Sigmoid colon (tissue), 7 donors: ENCODE measurements at regions of chr17 and their contacts with region 1.

Region 1: GRCh38 chr17:65055348-65056261 is 935 bp downstream of the GNA13 start:
- DNase-seq: peak; percentile 88
- H3K4me3 ChIP-seq: peak overlapping the region; percentile 91 to 97 (median 96)
- H3K27ac ChIP-seq: peak overlapping the region; percentile 98 to 99 (median 99)
- H3K4me1 ChIP-seq: peaks cover 0 to 43% (median 33%) of the 10 kb centered on the region in 4 donors
- H3K27me3 ChIP-seq: no peaks in the 10 kb centered on the region
- CTCF ChIP-seq: no peak
- EP300 ChIP-seq: peak in 1 of 4 donors; percentile 39
- POLR2A ChIP-seq: peak in 1 of 2 donors; percentile 33

Region 2: GRCh38 chr17:64950871-64951270 is 104.7 kb before region 1 on chr17:
- intact Hi-C with region 1: no loop called
- DNase-seq: no peak
- H3K4me3 ChIP-seq: no peak overlapping the region
- H3K27ac ChIP-seq: no peak overlapping the region
- H3K4me1 ChIP-seq: no peaks in the 10 kb centered on the region
- H3K27me3 ChIP-seq: no peaks in the 10 kb centered on the region
- CTCF ChIP-seq: no peak
- EP300 ChIP-seq: no peak
- POLR2A ChIP-seq: no peak

Region 3: GRCh38 chr17:64975329-64976087 is 80.1 kb before region 1 on chr17:
- intact Hi-C with region 1: loop called (anchors 2 kb)
- DNase-seq: peak; percentile 98
- H3K4me3 ChIP-seq: peak overlapping the region; percentile 66 to 89 (median 82)
- H3K27ac ChIP-seq: peak overlapping the region; percentile 95 to 99 (median 99)
- H3K4me1 ChIP-seq: peaks cover 0 to 25% (median 14%) of the 10 kb centered on the region in 4 donors
- H3K27me3 ChIP-seq: no peaks in the 10 kb centered on the region
- CTCF ChIP-seq: no peak
- EP300 ChIP-seq: peak in 2 of 4 donors; percentile 42 to 53
- POLR2A ChIP-seq: peak; percentile 82 to 84

Region 4: DNA sequence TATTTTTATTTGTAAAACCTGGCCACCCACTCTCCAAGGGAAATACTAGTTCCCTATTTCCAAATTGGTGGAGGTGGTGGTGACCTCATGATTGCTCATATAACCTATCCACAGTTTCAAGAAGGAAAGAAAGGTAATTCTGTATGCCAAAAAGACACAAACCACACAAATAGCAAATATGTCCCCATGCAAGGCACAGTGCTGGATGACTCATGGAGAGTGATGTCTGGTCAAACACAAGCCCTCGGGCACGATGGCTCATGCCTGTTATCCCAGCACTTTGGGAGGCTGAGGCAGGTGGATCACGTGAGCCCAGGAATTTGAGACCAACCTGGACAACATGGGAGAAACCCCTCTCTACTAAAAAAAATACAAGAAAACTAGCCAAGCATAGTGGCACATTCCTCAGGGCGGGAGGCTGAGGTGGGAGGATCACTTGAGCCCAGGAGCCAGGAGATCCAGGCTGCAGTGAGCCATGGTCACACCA is 63.2 kb before region 1 on chr17:
- intact Hi-C with region 1: no loop called
- DNase-seq: no peak
- H3K4me3 ChIP-seq: no peak overlapping the region
- H3K27ac ChIP-seq: no peak overlapping the region
- H3K4me1 ChIP-seq: peaks cover 0 to 36% (median 23%) of the 10 kb centered on the region in 4 donors
- H3K27me3 ChIP-seq: no peaks in the 10 kb centered on the region
- CTCF ChIP-seq: no peak
- EP300 ChIP-seq: no peak
- POLR2A ChIP-seq: no peak